ENCODE measurements at regions of chr4 and their contacts with region 1.

Region 1: GRCh38 chr4:67087897-67088296 is 457.4 kb downstream of the CENPC start:
- DNase-seq: peak; percentile 57 to 79 (median 64)
- H3K4me3 ChIP-seq: no peak overlapping the region
- H3K27ac ChIP-seq: no peak overlapping the region
- H3K4me1 ChIP-seq: no peaks in the 10 kb centered on the region
- H3K27me3 ChIP-seq: no peaks in the 10 kb centered on the region

Region 2: DNA sequence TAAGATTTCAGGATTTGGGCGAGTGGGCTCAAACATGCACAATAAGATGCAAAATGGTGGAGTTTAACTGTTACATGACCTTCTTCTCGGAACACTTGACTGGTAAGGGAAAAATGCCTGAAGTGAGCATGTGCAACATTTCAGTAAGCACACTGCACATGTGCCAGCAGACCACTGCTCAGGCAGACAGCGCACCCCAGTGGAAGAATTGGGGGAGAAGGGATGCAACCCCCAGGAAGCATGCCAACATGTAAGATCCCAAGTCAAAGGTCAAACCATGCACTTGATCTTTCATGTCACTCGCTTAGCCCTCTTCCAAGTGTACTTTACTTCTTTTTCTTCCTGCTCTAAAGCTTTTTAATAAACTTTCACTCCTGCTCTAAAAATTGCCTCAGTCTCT is 201.1 kb after region 1 on chr4:
- CTCF ChIA-PET with region 1: interaction called, 22 read pairs
- POLR2A ChIA-PET with region 1: no interaction called
- DNase-seq: peak; percentile 38 to 70 (median 59)
- H3K4me3 ChIP-seq: no peak overlapping the region
- H3K27ac ChIP-seq: no peak overlapping the region
- H3K4me1 ChIP-seq: no peaks in the 10 kb centered on the region
- H3K27me3 ChIP-seq: no peaks in the 10 kb centered on the region

Region 3: GRCh38 chr4:67327262-67328017 is 239.5 kb after region 1 on chr4:
- CTCF ChIA-PET with region 1: interaction called, 13 read pairs
- POLR2A ChIA-PET with region 1: no interaction called
- DNase-seq: peak; percentile 65 to 86 (median 85)
- H3K4me3 ChIP-seq: no peak overlapping the region
- H3K27ac ChIP-seq: no peak overlapping the region
- H3K4me1 ChIP-seq: peaks cover 0 to 3% (median 0%) of the 10 kb centered on the region in 4 experiments
- H3K27me3 ChIP-seq: peaks cover 0 to 9% (median 2%) of the 10 kb centered on the region in 5 experiments